MCF 10A (cell line): ENCODE measurements at regions of chr15 and their contacts with region 1.

Region 1: GRCh38 chr15:99275525-99276128 is 24.3 kb downstream of the LRRC28 start:
- DNase-seq: no peak
- H3K4me3 Mint-ChIP-seq: no peak overlapping the region
- H3K27ac Mint-ChIP-seq: no peak overlapping the region
- H3K4me1 Mint-ChIP-seq: no peaks in the 10 kb centered on the region
- H3K27me3 Mint-ChIP-seq: no peaks in the 10 kb centered on the region
- CTCF ChIP-seq: no peak

Region 2: GRCh38 chr15:99250494-99251435 is 24.9 kb before region 1 on chr15:
- CTCF ChIA-PET with region 1: interaction called, 13 read pairs
- POLR2A ChIA-PET with region 1: interaction called, 18 read pairs
- intact Hi-C with region 1: no loop called
- DNase-seq: peak; percentile 98
- H3K4me3 Mint-ChIP-seq: no peak overlapping the region
- H3K27ac Mint-ChIP-seq: no peak overlapping the region
- H3K4me1 Mint-ChIP-seq: peaks cover 23% of the 10 kb centered on the region
- H3K27me3 Mint-ChIP-seq: no peaks in the 10 kb centered on the region
- CTCF ChIP-seq: no peak

Region 3: DNA sequence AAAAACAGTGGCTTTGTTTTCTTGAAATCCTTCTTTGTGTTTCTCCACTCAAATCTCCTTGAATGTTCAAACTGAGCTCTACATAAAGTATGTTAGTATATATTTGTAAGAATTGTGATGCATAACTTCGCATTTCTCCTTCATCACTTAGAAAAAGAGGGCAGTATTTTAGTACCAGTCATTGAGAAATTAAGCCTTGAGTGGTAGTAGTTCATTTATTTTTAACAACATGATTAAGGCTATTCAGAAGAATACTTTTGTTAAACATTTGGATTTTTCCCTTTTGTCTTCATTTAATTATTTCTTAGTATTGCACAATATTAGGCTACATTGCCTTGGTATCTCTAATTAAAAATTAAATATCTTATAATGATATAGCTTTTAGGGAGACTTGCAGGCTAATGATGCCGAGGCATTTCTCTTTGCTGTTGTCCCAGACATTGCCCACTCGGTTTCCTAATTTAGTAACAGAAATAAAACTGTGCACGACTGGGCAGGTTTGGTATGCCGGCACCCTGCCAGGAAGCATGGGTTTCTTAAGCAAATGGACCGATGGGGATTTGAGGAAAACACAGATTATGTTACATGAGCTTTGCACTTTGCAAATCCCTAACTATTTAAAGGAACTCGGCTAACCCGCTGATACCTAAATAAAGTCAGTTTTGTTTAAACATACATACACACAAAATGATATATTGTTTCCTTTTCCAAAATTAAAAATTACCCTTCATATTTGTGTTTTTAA is 30.3 kb after region 1 on chr15:
- CTCF ChIA-PET with region 1: interaction called, 12 read pairs
- POLR2A ChIA-PET with region 1: no interaction called
- intact Hi-C with region 1: no loop called
- DNase-seq: peak; percentile 91
- H3K4me3 Mint-ChIP-seq: no peak overlapping the region
- H3K27ac Mint-ChIP-seq: peak overlapping the region; percentile 58
- H3K4me1 Mint-ChIP-seq: peaks cover 16% of the 10 kb centered on the region
- H3K27me3 Mint-ChIP-seq: no peaks in the 10 kb centered on the region
- CTCF ChIP-seq: no peak

Region 4: DNA sequence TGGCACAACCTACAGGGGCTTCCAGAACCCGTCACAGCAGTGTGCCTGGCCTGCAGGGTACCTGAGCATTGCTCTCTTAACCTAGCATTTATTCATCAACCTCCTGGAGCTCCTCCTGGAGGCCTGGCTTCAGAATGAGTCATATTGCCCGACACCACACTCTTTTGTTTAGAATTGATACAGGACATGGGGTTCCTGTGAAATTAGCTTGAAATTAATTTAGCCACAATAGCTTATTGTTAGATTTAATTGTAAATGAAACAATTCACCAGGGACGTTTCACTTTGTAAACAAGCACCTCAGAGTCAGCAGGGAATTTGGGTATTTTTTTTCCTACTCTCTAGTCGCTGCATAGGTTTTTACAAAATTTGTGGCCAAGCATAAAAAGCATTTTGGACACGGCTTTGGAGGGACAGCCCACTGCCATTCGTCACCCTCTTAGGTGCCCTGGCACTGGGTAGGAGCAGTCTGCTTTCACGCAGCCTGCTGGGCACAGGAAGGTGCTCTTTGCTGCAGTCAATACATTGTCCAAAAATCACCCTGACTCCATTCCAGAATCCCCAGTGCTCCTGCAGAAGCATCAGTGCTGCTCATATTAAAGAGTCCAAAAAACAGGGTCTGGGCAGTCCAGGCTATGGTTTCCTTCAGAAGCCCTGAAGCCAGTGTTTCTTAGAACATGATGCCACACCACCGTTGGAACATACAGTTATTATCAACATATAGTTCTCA is 229.4 kb after region 1 on chr15:
- CTCF ChIA-PET with region 1: no interaction called
- POLR2A ChIA-PET with region 1: no interaction called
- intact Hi-C with region 1: no loop called
- DNase-seq: peak; percentile 59
- H3K4me3 Mint-ChIP-seq: no peak overlapping the region
- H3K27ac Mint-ChIP-seq: no peak overlapping the region
- H3K4me1 Mint-ChIP-seq: peaks cover 16% of the 10 kb centered on the region
- H3K27me3 Mint-ChIP-seq: no peaks in the 10 kb centered on the region
- CTCF ChIP-seq: no peak

Region 5: GRCh38 chr15:99755692-99756409 is 480.2 kb after region 1 on chr15:
- CTCF ChIA-PET with region 1: interaction called, 49 read pairs
- POLR2A ChIA-PET with region 1: no interaction called
- intact Hi-C with region 1: loop called (anchors 1 kb)
- DNase-seq: peak; percentile 72
- H3K4me3 Mint-ChIP-seq: no peak overlapping the region
- H3K27ac Mint-ChIP-seq: no peak overlapping the region
- H3K4me1 Mint-ChIP-seq: peaks cover 5% of the 10 kb centered on the region
- H3K27me3 Mint-ChIP-seq: no peaks in the 10 kb centered on the region
- CTCF ChIP-seq: peak; percentile 82

Region 6: DNA sequence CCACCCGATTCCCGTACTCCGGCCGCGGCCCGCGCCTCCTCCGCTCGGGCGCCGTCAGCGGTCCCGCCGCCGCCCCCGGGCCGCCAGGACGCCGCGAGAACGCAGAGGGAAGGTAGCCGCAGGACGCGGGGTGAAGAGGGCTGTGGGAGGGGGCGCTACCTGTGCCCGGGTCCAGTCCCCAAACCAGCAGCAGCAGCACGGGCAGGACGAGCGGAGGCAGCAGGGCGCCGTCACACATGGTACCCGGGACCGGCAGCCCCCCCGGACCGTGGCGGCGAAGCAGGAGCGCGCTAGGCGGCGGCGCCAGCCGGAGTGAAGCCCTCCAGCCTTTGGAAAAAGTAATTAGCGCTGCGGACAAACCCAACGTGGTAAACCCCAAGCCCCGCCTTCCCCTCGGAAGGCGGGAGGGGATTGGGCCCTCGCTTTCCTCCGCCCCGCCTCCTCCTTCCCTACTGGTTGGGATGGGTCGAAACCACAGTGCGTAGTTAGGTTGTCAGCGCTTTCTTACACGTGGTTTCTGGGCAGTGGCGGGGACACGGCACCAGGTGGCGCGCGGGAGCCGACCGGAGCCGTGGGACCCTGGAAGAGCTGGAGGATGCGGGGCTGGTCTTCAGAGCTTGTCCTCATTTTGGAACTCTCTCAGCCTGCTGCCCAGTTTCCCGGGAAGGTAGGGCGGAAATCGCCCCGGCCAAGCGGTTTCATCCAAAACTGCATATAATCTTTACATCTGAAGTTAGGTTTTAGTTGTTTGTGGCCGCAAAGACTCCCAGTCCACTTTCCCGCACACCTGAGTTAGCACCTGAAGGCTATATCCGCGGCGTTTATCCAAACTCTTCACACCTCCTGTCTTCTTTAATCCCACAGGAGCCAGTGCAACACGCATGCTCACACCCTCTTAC is 1066.3 kb after region 1 on chr15 and contains the start of gene ADAMTS17:
- CTCF ChIA-PET with region 1: interaction called, 11 read pairs
- POLR2A ChIA-PET with region 1: interaction called, 3 read pairs
- intact Hi-C with region 1: loop called (anchors 2 kb)
- DNase-seq: peak; percentile 88
- H3K4me3 Mint-ChIP-seq: peak within 1 kb of the TSS; percentile 59
- H3K27ac Mint-ChIP-seq: no peak within 1 kb of the TSS
- H3K4me1 Mint-ChIP-seq: peaks cover 8% of the 10 kb centered on the region
- H3K27me3 Mint-ChIP-seq: no peaks in the 10 kb centered on the region
- CTCF ChIP-seq: peak; percentile 76
- total RNA-seq, gene ADAMTS17: 4.0 and 7.7 TPM in 2 replicates